CD14-positive monocyte (primary cell): ENCODE measurements at regions of chrX and their contacts with region 1.

Region 1: DNA sequence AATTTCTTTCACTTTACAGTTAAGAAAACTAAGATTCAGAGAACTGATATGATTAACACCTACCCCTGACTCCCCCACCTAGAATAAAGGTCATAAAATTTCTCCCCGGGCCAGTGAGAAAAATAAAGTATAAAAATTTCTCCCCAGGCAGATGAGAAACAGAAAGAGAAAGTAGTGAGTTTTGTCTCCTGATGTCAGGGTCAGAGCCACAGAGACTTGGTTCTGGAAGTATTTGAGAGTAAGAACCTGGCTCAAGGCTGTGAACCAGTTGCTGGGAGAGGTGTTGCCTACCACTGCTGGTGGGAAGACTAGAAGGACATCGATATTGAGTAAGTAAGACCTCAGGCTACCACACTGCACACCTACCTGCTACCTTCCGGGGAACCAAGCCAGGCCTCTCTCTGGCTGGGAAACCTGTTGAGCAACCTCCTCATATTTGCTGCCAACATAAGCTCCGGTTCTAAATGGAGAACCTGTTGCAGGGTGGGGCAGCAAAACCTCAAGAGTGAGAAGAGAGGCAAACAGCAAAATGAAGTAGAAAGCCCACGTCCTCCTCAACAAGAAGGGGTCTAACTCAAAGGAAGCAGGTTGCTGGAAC is 104.2 kb upstream of the PUDP start:
- DNase-seq: peak in 1 of 3 donors; percentile 30
- H3K4me3 ChIP-seq: peak overlapping the region in 2 of 3 experiments; percentile 17 to 49
- H3K4me3 Mint-ChIP-seq: peak overlapping the region; percentile 41 to 64
- H3K27ac ChIP-seq: peak overlapping the region; percentile 67 to 87
- H3K27ac Mint-ChIP-seq: peak overlapping the region; percentile 85 to 92 (median 92)
- H3K4me1 ChIP-seq: peaks cover 45 to 50% of the 10 kb centered on the region in 2 donors
- H3K4me1 Mint-ChIP-seq: peaks cover 46% of the 10 kb centered on the region
- H3K27me3 ChIP-seq: no peaks in the 10 kb centered on the region
- H3K27me3 Mint-ChIP-seq: peaks cover 0 to 2% (median 2%) of the 10 kb centered on the region in 3 donors
- CTCF ChIP-seq: no peak

Region 2: DNA sequence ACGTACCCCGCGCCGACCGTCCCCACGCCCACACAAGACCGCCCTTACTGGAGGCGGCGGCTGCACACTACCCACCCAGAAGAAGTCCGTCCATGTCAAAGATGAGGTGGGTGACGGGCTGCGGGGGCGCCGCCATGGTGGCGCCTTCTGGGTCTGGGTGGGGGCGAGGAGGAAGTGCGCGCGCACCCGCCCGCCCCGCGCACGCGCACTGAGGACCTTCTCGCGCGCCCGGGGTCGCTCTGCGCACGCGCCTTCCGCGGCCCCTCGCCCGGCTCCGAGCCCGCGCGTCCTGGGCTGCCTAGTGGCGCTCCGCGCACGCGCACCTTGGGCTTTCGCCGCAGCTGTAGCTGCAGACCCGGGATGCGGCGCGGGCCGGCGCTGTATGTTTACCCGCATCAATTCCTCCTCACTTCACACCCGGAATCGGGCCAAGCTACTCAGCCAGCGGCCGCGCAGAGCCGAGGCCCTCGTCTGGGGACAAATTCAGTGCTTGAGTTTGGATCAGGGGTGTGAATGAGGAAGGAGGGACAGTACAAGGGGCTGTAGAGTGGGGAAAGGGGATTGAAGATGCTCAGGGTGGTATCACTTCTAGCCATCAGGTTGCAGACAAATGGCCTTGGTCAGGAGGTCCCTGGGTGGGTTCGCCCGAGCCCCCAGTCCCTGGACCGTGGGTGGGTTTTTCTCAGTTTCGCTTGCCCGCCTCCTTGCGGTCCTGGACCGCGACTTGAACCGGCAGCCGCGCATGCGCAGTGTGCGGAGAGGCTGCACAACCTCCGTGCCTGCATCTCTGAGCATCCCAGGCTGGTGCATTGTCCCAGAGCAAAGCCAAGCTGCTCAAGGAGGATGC is 103.9 kb before region 1 on chrX and contains the start of gene PUDP:
- intact Hi-C with region 1: loop called in 1 of 2 experiments (anchors 10 kb)
- DNase-seq: peak; percentile 80 to 86 (median 81)
- H3K4me3 ChIP-seq: peak within 1 kb of the TSS; percentile 91 to 98 (median 95)
- H3K4me3 Mint-ChIP-seq: peak within 1 kb of the TSS; percentile 82 to 89
- H3K27ac ChIP-seq: peak within 1 kb of the TSS; percentile 73 to 87
- H3K27ac Mint-ChIP-seq: peak within 1 kb of the TSS; percentile 83 to 94 (median 90)
- H3K4me1 ChIP-seq: peaks cover 21 to 37% of the 10 kb centered on the region in 2 donors
- H3K4me1 Mint-ChIP-seq: peaks cover 26% of the 10 kb centered on the region
- H3K27me3 ChIP-seq: no peaks in the 10 kb centered on the region
- H3K27me3 Mint-ChIP-seq: peaks cover 0 to 6% (median 0%) of the 10 kb centered on the region in 3 donors
- CTCF ChIP-seq: no peak
- polyA plus RNA-seq, gene PUDP: 21.4 to 49.5 (median 45.4) TPM